A549 (cell line): ENCODE measurements at regions of chr5 and their contacts with region 1.

Region 1: DNA sequence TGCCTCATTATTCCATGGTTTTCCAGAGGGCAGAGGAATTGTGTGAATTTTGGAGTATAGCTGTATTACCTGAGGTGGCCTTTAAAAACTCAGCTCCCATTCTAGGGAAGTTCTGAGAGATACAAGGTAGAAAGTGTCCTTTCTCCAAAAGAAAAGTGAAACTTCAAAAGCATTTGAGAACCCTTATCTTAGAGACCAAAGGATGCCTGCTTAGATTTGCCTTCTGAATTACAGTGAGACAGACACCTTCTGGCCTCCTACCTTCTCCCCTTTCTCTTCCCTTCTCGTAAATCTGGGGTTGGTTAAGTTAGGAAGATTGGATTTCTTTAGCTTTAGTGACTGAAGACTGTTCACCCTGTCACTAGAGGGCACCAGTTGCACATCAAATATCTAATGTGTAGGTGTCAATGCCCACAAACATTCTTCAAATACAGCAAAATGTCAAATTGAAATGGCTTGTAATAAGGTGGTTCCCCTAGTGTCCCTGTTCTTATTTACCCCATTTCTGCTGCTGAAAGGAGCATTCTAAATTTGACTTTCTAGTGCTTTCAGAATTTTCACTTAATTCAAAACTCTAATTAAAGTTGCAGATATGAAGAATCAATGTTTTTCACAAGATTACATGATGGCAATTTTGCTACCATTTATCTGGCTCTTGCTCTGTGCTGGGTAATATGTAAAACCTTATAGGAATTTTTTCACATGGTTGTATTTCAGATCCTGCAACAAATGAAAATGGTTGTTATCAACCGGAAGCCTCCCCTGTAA is 46.7 kb downstream of the PRRC1 start:
- DNase-seq: peak; percentile 46 to 65
- ATAC-seq: peak; percentile 85 to 93
- H3K4me3 ChIP-seq: no peak overlapping the region
- H3K27ac ChIP-seq: no peak overlapping the region
- H3K4me1 ChIP-seq: no peaks in the 10 kb centered on the region
- CTCF ChIP-seq: peak; percentile 89
- EP300 ChIP-seq: no peak
- POLR2A ChIP-seq: no peak
- RAD21 ChIP-seq: peak; percentile 84 to 89

Region 2: GRCh38 chr5:127186657-127187056 is 377.5 kb before region 1 on chr5:
- CTCF ChIA-PET with region 1: no interaction called
- POLR2A ChIA-PET with region 1: no interaction called
- DNase-seq: peak in 1 of 2 experiments; percentile 12
- ATAC-seq: peak in 1 of 2 experiments; percentile 47; a peak in 1 of 6 replicates
- H3K4me3 ChIP-seq: no peak overlapping the region
- H3K27ac ChIP-seq: no peak overlapping the region
- H3K4me1 ChIP-seq: no peaks in the 10 kb centered on the region; the same call in 2 of the 3 replicates
- CTCF ChIP-seq: no peak
- EP300 ChIP-seq: no peak
- POLR2A ChIP-seq: no peak
- RAD21 ChIP-seq: no peak

Region 3: GRCh38 chr5:127517480-127518318 is 46.5 kb before region 1 on chr5 and contains the start of gene PRRC1:
- CTCF ChIA-PET with region 1: no interaction called
- POLR2A ChIA-PET with region 1: no interaction called
- DNase-seq: peak; percentile 64 to 86
- ATAC-seq: peak; percentile 91 to 97
- H3K4me3 ChIP-seq: peak within 1 kb of the TSS; percentile 88
- H3K27ac ChIP-seq: peak within 1 kb of the TSS; percentile 75 to 92
- H3K4me1 ChIP-seq: peaks cover 7% of the 10 kb centered on the region; the same call in 2 of the 3 replicates
- CTCF ChIP-seq: no peak
- EP300 ChIP-seq: no peak
- POLR2A ChIP-seq: peak; percentile 94
- RAD21 ChIP-seq: no peak
- polyA plus RNA-seq, gene PRRC1: 80.4 and 82.2 TPM in 2 replicates

Region 4: DNA sequence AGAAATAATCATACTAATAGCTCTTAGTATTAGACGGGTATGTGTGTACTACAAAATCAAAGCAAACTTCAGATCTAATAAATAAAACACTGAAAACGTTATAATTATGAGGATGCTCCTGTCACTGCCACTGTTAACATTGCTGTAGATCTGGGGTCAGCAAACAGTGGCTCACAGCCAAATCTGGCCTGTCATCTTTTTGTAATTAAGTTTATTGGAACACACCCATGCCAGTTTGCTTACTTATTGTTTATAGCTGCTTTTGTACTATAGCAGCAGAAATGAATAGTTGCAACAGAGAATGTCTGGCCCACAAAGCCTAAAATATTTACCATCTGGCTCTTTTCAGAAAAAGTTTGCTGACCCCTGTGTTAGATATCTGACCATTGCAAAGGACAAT is 14.7 kb before region 1 on chr5:
- CTCF ChIA-PET with region 1: interaction called, 17 read pairs
- POLR2A ChIA-PET with region 1: no interaction called
- DNase-seq: no peak
- ATAC-seq: no peak
- H3K4me3 ChIP-seq: no peak overlapping the region
- H3K27ac ChIP-seq: no peak overlapping the region
- H3K4me1 ChIP-seq: no peaks in the 10 kb centered on the region
- CTCF ChIP-seq: no peak
- EP300 ChIP-seq: no peak
- POLR2A ChIP-seq: no peak
- RAD21 ChIP-seq: no peak